Activated CD4-positive, alpha-beta T cell treated with anti-CD3 and anti-CD28 coated beads for 36 hours (primary cell): ENCODE measurements at regions of chr19 and their contacts with region 1.

Region 1: DNA sequence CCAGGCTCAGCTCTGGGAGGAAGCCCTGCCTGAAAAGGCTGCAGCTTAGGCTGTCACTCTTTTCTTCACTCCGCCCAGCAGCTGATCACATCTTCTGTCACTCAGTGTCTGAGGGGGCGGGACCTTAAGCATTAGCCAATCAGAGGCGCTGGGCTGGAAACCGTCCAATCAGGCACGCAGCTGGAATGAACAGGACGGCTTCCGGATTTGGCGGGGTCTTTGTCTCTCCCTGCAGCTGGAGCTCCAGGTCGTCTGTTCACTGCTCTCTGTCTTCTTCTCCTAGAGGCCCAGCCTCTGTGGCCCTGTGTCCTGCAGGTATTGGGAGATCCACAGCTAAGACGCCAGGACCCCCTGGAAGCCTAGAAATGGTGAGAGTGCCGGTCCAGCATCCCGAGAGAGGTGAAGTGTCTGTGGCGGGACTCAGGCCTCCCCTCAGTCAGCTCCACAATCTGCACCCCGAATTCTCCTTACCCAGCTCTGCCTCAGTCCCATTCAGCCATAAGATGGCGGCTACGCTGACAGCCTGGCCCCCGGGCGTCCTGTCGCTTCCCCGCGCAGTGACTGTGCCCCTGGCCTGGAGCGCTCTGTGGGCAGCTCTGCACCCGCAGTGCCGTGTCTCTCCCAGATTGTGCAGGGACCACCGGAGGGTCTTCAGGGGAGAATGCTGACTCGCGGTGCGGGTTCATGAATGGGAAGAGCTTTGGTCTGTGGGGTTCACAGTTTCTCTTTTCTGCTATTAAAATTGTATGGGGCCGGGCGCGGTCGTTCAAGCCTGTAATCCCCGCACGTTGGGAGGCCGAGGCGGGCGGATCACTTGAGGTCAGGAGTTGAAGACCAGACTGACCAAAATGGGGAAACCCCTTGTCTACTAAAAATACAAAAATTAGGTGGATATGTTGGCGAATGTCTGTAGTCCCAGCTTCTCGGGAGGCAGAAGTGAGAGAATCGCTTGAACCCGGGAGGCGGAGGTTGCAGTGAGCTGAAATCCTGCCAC is at the start of gene ZNF66:
- DNase-seq: peak; percentile 96
- ATAC-seq: peak; percentile 98
- H3K4me3 Mint-ChIP-seq: peak within 1 kb of the TSS; percentile 98
- H3K27ac Mint-ChIP-seq: peak within 1 kb of the TSS; percentile 98
- H3K4me1 Mint-ChIP-seq: peaks cover 7% of the 10 kb centered on the region
- H3K27me3 Mint-ChIP-seq: no peaks in the 10 kb centered on the region
- total RNA-seq, gene ZNF66: 8.8 to 11.1 TPM

Region 2: GRCh38 chr19:20154628-20155027 is 621.8 kb before region 1 on chr19:
- CTCF ChIA-PET with region 1: no interaction called
- POLR2A ChIA-PET with region 1: no interaction called
- intact Hi-C with region 1: no loop called
- DNase-seq: no peak
- ATAC-seq: no peak
- H3K4me3 Mint-ChIP-seq: no peak overlapping the region
- H3K27ac Mint-ChIP-seq: no peak overlapping the region
- H3K4me1 Mint-ChIP-seq: no peaks in the 10 kb centered on the region
- H3K27me3 Mint-ChIP-seq: no peaks in the 10 kb centered on the region

Region 3: GRCh38 chr19:20565321-20566018 is 210.9 kb before region 1 on chr19 and contains the start of gene ZNF737:
- CTCF ChIA-PET with region 1: interaction called, 4 read pairs
- POLR2A ChIA-PET with region 1: interaction called, 5 read pairs
- intact Hi-C with region 1: loop called (anchors 1 to 2 kb)
- DNase-seq: peak; percentile 97
- ATAC-seq: peak; percentile 97
- H3K4me3 Mint-ChIP-seq: peak within 1 kb of the TSS; percentile 98
- H3K27ac Mint-ChIP-seq: peak within 1 kb of the TSS; percentile 98
- H3K4me1 Mint-ChIP-seq: peaks cover 19% of the 10 kb centered on the region
- H3K27me3 Mint-ChIP-seq: no peaks in the 10 kb centered on the region
- total RNA-seq, gene ZNF737: 13.9 to 16.4 TPM

Region 4: GRCh38 chr19:20923077-20923871 is 146.9 kb after region 1 on chr19 and contains the start of gene ZNF85:
- CTCF ChIA-PET with region 1: interaction called, 4 read pairs
- POLR2A ChIA-PET with region 1: interaction called, 9 read pairs
- intact Hi-C with region 1: loop called in 1 of 2 experiments (anchors 1 kb)
- DNase-seq: peak; percentile 95
- ATAC-seq: peak; percentile 99
- H3K4me3 Mint-ChIP-seq: peak within 1 kb of the TSS; percentile 91
- H3K27ac Mint-ChIP-seq: peak within 1 kb of the TSS; percentile 96
- H3K4me1 Mint-ChIP-seq: peaks cover 25% of the 10 kb centered on the region
- H3K27me3 Mint-ChIP-seq: no peaks in the 10 kb centered on the region
- total RNA-seq, gene ZNF85: 23.2 to 29.3 TPM

Region 5: GRCh38 chr19:21082011-21082975 is 305.9 kb after region 1 on chr19 and contains the start of gene ZNF714:
- CTCF ChIA-PET with region 1: no interaction called
- POLR2A ChIA-PET with region 1: no interaction called
- intact Hi-C with region 1: loop called in 1 of 2 experiments (anchors 1 kb)
- DNase-seq: peak; percentile 89
- ATAC-seq: peak; percentile 98
- H3K4me3 Mint-ChIP-seq: peak within 1 kb of the TSS; percentile 99
- H3K27ac Mint-ChIP-seq: peak within 1 kb of the TSS; percentile 97
- H3K4me1 Mint-ChIP-seq: peaks cover 24% of the 10 kb centered on the region
- H3K27me3 Mint-ChIP-seq: no peaks in the 10 kb centered on the region
- total RNA-seq, gene ZNF714: 17.4 to 20.0 TPM

Region 6: DNA sequence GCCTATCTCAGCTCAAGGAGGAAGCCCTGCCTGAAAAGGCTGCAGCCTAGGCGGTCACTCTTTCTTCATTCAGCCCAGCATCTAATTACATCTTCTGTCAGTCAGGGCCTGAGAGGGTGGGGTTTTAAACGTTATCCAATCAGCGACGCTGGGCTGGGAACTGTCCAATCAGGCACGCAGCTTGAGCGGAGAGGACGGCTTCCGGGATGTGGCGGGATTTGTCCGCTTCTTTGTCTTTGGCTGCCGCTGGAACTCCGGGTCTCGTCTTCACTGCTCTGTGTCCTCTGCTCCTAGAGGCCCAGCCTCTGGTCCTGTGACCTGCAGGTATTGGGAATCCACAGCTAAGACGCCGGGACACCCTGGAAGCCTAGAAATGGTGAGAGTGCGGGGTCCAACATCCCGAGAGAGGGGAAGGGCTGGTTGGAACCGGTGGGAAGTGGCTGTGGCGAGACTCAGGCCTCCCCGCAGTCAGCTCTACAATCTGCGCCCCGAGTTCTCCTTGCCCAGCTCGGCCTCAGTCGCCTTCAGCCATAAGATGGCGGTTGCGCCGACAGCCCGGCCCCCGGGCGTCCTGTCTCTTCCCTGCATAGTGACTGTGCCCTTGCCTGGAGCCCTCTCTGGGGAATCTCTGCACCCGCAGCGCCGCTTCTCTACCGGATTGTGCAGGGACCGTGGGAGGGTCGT is 582.5 kb after region 1 on chr19 and contains the start of gene ZNF738:
- CTCF ChIA-PET with region 1: no interaction called
- POLR2A ChIA-PET with region 1: no interaction called
- intact Hi-C with region 1: loop called in 1 of 2 experiments (anchors 1 kb)
- DNase-seq: peak; percentile 94
- ATAC-seq: peak; percentile 98
- H3K4me3 Mint-ChIP-seq: peak within 1 kb of the TSS; percentile 99
- H3K27ac Mint-ChIP-seq: peak within 1 kb of the TSS; percentile 99
- H3K4me1 Mint-ChIP-seq: peaks cover 10% of the 10 kb centered on the region
- H3K27me3 Mint-ChIP-seq: no peaks in the 10 kb centered on the region
- total RNA-seq, gene ZNF738: 15.8 to 19.5 TPM